ENCODE measurements at regions of chr1 and their contacts with region 1.

Region 1: GRCh38 chr1:109263597-109264398 is 14.5 kb downstream of the CELSR2 start:
- DNase-seq: no peak
- H3K4me3 ChIP-seq: no peak overlapping the region
- H3K27ac ChIP-seq: peak overlapping the region; percentile 40
- H3K4me1 ChIP-seq: peaks cover 32% of the 10 kb centered on the region
- H3K27me3 ChIP-seq: no peaks in the 10 kb centered on the region
- CTCF ChIP-seq: peak; percentile 100

Region 2: GRCh38 chr1:108692724-108693655 is 570.8 kb before region 1 on chr1:
- CTCF ChIA-PET with region 1: no interaction called
- dilution Hi-C with region 1: no loop called
- in situ Hi-C with region 1: no loop called
- intact Hi-C with region 1: no loop called
- DNase-seq: peak; percentile 75
- H3K4me3 ChIP-seq: peak overlapping the region; percentile 87 to 96 (median 94)
- H3K27ac ChIP-seq: peak overlapping the region; percentile 75
- H3K4me1 ChIP-seq: no peaks in the 10 kb centered on the region
- H3K27me3 ChIP-seq: no peaks in the 10 kb centered on the region
- CTCF ChIP-seq: peak in 1 of 2 donors; percentile 47

Region 3: DNA sequence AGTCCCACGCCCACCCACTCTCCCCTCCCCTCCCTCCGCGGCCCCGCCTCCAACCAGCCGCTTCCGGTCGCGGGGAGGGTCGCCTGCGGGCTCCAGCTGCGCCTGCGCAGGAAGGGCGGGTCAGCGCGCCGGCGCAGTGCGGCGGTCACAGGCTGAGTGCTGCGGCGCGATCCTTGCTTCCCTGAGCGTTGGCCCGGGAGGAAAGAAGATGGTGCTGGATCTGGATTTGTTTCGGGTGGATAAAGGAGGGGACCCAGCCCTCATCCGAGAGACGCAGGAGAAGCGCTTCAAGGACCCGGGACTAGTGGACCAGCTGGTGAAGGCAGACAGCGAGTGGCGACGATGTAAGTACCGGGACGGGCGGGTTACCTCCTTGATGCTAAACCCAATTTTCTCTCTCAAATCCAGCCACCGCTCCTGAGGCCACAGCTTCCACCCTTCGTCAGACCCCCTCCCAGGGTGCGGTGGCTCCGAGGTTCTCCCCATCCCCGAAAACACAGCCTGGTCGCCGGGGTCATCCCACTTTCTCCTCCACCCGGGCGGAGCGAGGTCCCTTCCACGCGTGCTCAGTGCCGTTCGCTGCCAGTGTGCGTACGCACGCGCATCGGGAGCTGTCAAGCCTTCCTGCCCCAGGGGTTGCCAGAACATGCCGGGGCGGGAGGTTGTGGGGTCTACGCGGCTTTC is 49.9 kb before region 1 on chr1 and contains the start of gene SARS1:
- CTCF ChIA-PET with region 1: no interaction called
- dilution Hi-C with region 1: no loop called
- in situ Hi-C with region 1: no loop called
- intact Hi-C with region 1: loop called (anchors 1 kb)
- DNase-seq: peak; percentile 77
- H3K4me3 ChIP-seq: peak within 1 kb of the TSS; percentile 74 to 95 (median 94)
- H3K27ac ChIP-seq: peak within 1 kb of the TSS; percentile 97
- H3K4me1 ChIP-seq: peaks cover 38% of the 10 kb centered on the region
- H3K27me3 ChIP-seq: no peaks in the 10 kb centered on the region
- CTCF ChIP-seq: no peak
- total RNA-seq, gene SARS1: 349 to 468 TPM

Region 4: GRCh38 chr1:109373126-109373525 is 109.3 kb after region 1 on chr1:
- CTCF ChIA-PET with region 1: no interaction called
- dilution Hi-C with region 1: no loop called
- in situ Hi-C with region 1: no loop called
- intact Hi-C with region 1: no loop called
- DNase-seq: no peak
- H3K4me3 ChIP-seq: no peak overlapping the region
- H3K27ac ChIP-seq: no peak overlapping the region
- H3K4me1 ChIP-seq: peaks cover 14% of the 10 kb centered on the region
- H3K27me3 ChIP-seq: no peaks in the 10 kb centered on the region
- CTCF ChIP-seq: no peak

Region 5: DNA sequence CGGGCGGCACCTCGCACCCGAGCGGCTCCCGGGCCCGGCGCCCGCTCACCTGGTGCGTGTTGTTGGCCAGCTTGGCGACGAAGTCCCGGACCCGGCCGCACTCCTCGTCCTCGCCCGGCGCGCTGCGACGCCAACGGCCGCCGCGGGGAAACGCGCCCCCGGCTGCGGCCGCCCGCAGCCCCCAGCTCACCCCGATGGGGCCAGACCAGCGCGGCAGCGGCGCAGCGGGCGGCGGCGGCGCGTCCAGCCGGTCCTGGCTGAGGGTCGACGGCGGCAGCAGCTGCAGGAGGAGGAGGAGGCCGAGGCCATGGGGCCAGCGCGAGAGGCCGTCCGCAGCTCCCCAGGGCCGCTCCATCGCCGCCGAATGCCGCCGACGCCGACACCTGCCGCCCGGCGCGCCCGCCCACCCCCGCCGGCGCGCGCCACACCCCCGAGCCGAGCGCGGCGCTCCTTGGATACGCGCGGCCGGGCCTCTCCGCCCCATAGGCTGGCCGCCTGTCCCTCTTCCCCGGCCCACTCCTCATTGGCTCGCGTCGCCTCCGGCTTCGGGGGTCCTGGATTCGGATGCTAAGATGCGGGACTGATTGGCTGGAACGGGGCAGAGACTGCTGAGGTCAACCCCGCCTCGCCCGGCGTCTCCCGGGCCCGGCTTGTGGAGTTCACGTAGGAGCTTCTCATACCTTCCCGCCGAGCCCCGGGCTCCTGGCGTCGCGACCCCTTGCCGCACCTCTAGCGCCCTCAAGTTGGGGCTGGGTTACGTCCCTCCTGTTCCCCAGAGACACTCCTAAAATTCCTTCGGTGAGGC is 133.9 kb after region 1 on chr1 and contains the start of gene SORT1:
- CTCF ChIA-PET with region 1: interaction called, 4 read pairs
- dilution Hi-C with region 1: no loop called
- in situ Hi-C with region 1: loop called in 1 of 2 experiments (anchors 10 kb)
- intact Hi-C with region 1: loop called (anchors 1 kb)
- DNase-seq: peak; percentile 77
- H3K4me3 ChIP-seq: peak within 1 kb of the TSS; percentile 54 to 73 (median 65)
- H3K27ac ChIP-seq: peak within 1 kb of the TSS; percentile 16
- H3K4me1 ChIP-seq: peaks cover 20% of the 10 kb centered on the region
- H3K27me3 ChIP-seq: no peaks in the 10 kb centered on the region
- CTCF ChIP-seq: no peak
- total RNA-seq, gene SORT1: 24.6 to 41.8 TPM

Measured in mammary epithelial cell (primary cell).